HepG2 (cell line): ENCODE measurements at regions of chr18 and their contacts with region 1.

Region 1: DNA sequence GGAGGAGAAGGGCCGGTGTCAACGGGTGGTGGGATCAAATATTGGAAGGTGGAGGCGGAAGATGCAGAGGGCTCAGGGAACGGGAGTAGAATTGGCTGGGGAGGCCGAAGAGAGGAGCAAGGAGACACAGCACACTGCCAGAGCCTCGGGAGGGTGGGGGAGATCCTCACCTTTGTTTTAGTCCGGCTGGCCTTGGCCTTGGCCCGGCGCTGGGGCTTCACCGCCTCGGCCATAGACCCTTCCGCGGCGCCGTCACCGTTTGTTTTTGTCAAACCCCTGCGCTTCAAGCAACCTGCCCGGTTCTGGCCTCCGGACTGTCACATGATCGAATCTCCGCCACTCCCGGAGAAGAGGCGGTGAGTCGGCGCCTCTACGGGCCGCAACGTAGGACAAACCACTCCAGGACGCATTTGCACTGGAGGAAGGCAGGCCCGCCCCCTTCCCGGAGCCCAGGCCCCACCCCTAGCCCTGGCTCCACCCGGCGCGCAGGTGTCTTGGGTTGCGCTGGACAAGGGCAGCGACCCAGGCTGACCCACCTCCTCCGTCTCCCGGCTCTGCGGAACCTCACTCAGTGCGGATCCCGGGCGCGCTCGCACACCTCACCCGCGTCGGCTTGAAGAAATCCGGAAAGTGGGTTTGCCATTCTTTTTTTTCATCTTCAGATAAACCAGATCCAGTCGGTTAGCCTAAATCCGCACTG is at the start of gene EPG5:
- DNase-seq: peak; percentile 93
- ATAC-seq: peak; percentile 99
- H3K4me3 ChIP-seq: peak within 1 kb of the TSS; percentile 96 to 100 (median 97)
- H3K27ac ChIP-seq: peak within 1 kb of the TSS; percentile 73
- H3K4me1 ChIP-seq: peaks cover 29% of the 10 kb centered on the region
- H3K27me3 ChIP-seq: no peaks in the 10 kb centered on the region; a peak in 1 of 5 replicates
- CTCF ChIP-seq: no peak
- EP300 ChIP-seq: no peak
- POLR2A ChIP-seq: peak; percentile 68 to 74
- RAD21 ChIP-seq: no peak
- total RNA-seq, gene EPG5: 6.7 and 13.3 TPM in 2 replicates

Region 2: DNA sequence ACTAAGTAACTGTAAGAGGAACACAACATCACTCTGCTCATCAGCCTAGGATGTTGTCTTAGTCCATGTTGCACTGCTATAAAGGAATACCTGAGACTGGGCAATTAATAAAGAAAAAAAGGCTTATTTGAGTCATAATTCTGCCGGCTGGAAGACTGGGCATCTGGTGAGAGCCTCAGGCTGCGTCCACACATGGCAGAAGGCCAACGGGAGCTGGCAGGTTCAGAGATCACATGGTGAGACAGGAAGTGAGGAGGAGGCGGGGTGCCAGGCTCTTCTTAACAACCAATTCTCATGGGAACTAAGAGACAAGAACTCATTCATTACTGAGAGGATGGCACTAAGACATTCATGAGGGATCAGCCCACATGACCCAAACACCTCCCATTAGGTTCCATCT is 46.8 kb before region 1 on chr18:
- CTCF ChIA-PET with region 1: no interaction called
- POLR2A ChIA-PET with region 1: no interaction called
- in situ Hi-C with region 1: no loop called
- intact Hi-C with region 1: loop called (anchors 5 kb)
- DNase-seq: no peak
- ATAC-seq: no peak
- H3K4me3 ChIP-seq: no peak overlapping the region
- H3K27ac ChIP-seq: no peak overlapping the region
- H3K4me1 ChIP-seq: no peaks in the 10 kb centered on the region
- H3K27me3 ChIP-seq: no peaks in the 10 kb centered on the region
- CTCF ChIP-seq: no peak
- EP300 ChIP-seq: no peak
- POLR2A ChIP-seq: no peak
- RAD21 ChIP-seq: no peak

Region 3: DNA sequence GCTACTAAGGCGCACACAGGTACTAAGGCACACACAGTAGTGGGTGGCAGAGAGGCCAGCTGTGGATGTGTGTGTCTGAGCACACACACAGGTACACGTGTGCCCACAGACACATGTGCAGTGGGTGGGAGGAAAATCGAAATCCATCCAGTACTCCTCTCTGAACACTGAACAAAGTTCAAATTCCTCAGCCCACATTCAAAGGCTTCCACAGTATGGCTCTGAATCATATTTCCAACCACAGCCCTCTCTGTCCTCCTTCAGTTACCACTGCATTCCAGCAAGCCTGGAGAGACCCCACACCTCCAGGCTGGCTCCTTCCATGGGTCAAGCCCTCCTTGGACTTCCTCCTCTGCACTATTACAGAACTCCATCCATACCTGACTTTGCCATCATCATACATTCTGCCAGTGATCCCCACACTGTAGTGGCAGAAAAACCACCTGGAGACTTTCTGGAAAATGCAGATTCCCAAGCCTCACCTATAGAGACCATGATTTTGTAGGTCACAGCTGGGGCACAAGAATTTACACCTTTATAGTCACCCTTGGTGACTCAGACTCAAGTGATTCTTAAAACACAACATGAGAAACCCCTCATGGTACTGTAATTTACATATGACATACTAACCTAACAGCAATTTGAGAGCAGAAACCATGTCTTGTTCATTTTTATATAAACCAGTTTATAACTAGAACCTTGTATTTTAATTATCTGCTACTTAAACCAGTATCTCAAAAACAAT is 31.4 kb before region 1 on chr18:
- CTCF ChIA-PET with region 1: no interaction called
- POLR2A ChIA-PET with region 1: no interaction called
- in situ Hi-C with region 1: no loop called
- intact Hi-C with region 1: loop called (anchors 1 kb)
- DNase-seq: peak; percentile 54
- ATAC-seq: peak; percentile 95
- H3K4me3 ChIP-seq: no peak overlapping the region
- H3K27ac ChIP-seq: peak overlapping the region; percentile 27
- H3K4me1 ChIP-seq: peaks cover 14% of the 10 kb centered on the region
- H3K27me3 ChIP-seq: no peaks in the 10 kb centered on the region
- CTCF ChIP-seq: no peak
- EP300 ChIP-seq: no peak
- POLR2A ChIP-seq: no peak
- RAD21 ChIP-seq: no peak